PC-3 (cell line): ENCODE measurements at regions of chr7 and their contacts with region 1.

Region 1: GRCh38 chr7:46544374-46545008 is 623.4 kb upstream of the IGFBP3 start:
- DNase-seq: peak; percentile 76
- ATAC-seq: peak; percentile 62
- H3K4me3 ChIP-seq: no peak overlapping the region
- H3K27ac ChIP-seq: peak overlapping the region; percentile 85
- H3K4me1 ChIP-seq: peaks cover 32% of the 10 kb centered on the region
- H3K27me3 ChIP-seq: no peaks in the 10 kb centered on the region
- CTCF ChIP-seq: no peak

Region 2: DNA sequence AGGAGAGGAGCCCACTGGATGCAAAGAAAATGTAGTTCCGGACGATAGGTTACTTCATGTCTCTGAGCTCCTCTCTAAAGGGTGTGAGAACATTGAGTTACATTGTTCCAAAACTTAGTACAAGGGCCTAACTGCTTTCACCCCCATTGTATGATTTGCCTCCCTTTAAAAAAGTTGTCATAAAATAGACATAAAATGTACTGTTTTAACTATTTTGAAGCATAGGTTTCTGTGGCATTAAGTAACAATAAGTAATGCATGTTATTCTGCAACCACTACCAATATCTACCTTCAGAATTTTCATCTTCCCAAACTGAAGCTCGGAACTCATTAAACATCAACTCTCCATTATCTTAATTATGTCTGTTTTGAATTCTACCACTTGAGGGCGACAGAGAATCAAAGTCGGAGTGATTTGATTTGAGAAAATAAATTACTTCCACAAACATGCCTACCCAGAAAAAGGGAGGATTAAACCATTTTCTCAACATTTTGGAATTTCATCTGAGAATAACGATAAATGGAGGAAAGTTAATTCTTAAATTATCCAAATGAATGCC is 653.5 kb before region 1 on chr7:
- CTCF ChIA-PET with region 1: no interaction called
- POLR2A ChIA-PET with region 1: no interaction called
- intact Hi-C with region 1: loop called (anchors 10 kb)
- DNase-seq: peak; percentile 78
- ATAC-seq: no peak
- H3K4me3 ChIP-seq: no peak overlapping the region
- H3K27ac ChIP-seq: no peak overlapping the region
- H3K4me1 ChIP-seq: peaks cover 26% of the 10 kb centered on the region
- H3K27me3 ChIP-seq: no peaks in the 10 kb centered on the region
- CTCF ChIP-seq: peak; percentile 82

Region 3: GRCh38 chr7:46385662-46386309 is 158.7 kb before region 1 on chr7:
- CTCF ChIA-PET with region 1: no interaction called
- POLR2A ChIA-PET with region 1: no interaction called
- intact Hi-C with region 1: loop called (anchors 2 kb)
- DNase-seq: peak; percentile 94
- ATAC-seq: peak; percentile 98
- H3K4me3 ChIP-seq: no peak overlapping the region
- H3K27ac ChIP-seq: peak overlapping the region; percentile 95
- H3K4me1 ChIP-seq: peaks cover 27% of the 10 kb centered on the region
- H3K27me3 ChIP-seq: no peaks in the 10 kb centered on the region
- CTCF ChIP-seq: no peak

Region 4: DNA sequence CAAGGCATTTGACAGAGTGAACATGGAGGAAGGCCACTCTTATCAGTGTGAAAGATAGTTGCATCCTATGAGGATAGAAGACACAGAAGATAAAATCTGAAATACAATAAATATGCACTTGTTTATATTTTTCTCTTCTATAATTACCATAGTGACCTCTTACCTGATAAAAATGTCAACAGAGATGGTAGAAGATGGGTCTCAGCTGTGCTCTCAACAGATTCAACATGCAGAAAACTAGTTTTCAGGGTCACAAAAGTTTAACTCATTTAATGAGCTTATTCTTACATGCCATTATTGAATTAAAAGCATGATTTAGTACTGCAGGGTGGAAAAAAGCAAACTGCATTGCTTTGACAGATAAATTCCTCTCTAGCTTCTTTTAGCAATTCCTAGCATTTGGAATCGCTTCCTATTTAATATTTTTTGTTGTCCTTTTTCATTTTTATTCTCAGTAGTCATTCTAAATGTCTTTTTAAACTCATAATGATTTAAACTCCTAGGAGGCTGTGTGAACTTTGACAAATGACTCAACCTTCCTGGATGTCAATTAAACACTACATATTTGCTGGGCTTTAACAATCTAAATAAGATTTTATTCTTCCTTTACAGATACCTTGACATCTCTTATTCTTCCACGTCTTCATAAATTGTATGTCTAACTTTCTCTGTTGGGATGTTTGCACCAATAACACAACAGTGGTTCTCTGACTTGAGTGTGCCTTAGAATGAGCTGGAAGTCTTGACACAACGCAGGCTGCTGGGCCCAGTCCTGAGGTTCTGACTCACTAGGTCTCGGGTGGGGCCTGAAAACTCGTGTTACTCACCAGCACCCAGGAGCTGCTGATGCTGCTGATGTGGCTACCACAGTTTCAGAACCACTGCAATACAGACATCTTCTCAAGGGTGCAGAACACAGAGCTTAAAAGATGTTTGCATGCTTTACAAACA is 58.0 kb before region 1 on chr7:
- CTCF ChIA-PET with region 1: interaction called, 3 read pairs
- POLR2A ChIA-PET with region 1: interaction called, 3 read pairs
- intact Hi-C with region 1: loop called (anchors 2 kb)
- DNase-seq: peak; percentile 80
- ATAC-seq: peak; percentile 82
- H3K4me3 ChIP-seq: peak overlapping the region; percentile 7; the same call in 1 of the 2 replicates
- H3K27ac ChIP-seq: peak overlapping the region; percentile 88
- H3K4me1 ChIP-seq: peaks cover 39% of the 10 kb centered on the region
- H3K27me3 ChIP-seq: no peaks in the 10 kb centered on the region
- CTCF ChIP-seq: no peak

Region 5: DNA sequence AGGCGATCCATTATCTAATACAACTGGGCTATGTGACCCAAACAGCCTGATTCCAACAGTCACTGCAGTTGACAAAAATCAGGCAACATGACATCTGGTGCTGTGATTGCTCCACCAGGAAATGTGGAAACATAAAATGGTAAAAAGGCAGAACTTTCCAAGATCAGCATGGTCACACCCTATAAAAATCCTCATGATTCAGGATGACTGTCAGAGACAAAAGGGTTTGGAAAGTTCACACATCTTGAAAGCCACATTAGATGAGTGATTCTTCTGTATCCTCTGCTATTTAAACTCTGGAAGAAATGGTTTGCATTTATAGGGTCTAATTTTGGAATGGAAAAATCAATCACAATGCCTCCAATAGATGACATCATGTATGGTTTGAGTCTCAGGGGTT is 39.2 kb after region 1 on chr7:
- CTCF ChIA-PET with region 1: no interaction called
- POLR2A ChIA-PET with region 1: no interaction called
- intact Hi-C with region 1: loop called (anchors 5 kb)
- DNase-seq: peak; percentile 67
- ATAC-seq: peak; percentile 87
- H3K4me3 ChIP-seq: no peak overlapping the region
- H3K27ac ChIP-seq: peak overlapping the region; percentile 36
- H3K4me1 ChIP-seq: peaks cover 13% of the 10 kb centered on the region; the same call in 1 of the 2 replicates
- H3K27me3 ChIP-seq: no peaks in the 10 kb centered on the region
- CTCF ChIP-seq: no peak

Region 6: GRCh38 chr7:46630031-46630430 is 85.5 kb after region 1 on chr7:
- CTCF ChIA-PET with region 1: no interaction called
- POLR2A ChIA-PET with region 1: no interaction called
- intact Hi-C with region 1: no loop called
- DNase-seq: no peak
- ATAC-seq: no peak
- H3K4me3 ChIP-seq: no peak overlapping the region
- H3K27ac ChIP-seq: no peak overlapping the region
- H3K4me1 ChIP-seq: no peaks in the 10 kb centered on the region
- H3K27me3 ChIP-seq: no peaks in the 10 kb centered on the region
- CTCF ChIP-seq: no peak

Region 7: DNA sequence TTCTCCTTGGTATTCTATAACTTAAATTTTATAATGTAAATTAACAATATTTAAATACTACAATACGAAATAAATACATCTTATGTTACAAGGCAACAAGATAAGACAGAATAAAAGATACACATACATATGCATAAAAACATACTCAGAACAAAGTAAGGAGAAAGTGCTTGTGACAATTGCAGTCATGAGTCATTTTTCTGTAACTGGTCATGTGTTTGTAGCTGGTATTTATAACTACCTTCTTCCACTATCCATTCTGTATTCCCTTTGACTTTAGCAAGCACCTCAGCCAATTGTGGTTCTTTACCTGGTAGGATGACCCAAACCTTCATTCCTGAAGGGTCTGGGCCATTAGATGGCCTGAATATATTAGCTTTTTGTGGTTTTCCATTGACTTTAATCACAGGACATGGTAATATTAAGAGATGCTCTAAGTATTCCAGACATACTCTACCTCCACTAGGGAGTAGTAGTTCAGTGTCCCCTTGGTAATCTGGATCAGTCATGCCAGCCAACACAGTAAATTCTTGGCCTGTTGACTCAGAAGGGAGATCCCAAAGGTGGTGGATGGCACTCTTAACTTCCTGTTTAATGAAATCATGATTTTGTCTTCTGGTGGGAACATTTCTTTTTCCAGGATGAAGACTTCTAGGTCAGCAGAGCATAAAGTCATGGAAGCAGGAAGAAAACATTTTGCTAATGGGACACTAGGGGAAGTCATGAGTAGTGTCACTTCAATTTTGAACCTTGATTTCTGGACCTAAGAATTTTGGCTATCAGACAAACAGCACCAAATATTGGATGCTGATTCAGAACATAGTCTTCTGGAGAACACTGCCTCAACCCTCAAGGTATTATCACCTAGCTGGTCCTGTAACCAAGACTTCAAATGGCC is 110.3 kb after region 1 on chr7:
- CTCF ChIA-PET with region 1: no interaction called
- POLR2A ChIA-PET with region 1: no interaction called
- intact Hi-C with region 1: loop called (anchors 1 kb)
- DNase-seq: peak; percentile 41
- ATAC-seq: no peak
- H3K4me3 ChIP-seq: no peak overlapping the region
- H3K27ac ChIP-seq: peak overlapping the region; percentile 10; the same call in 1 of the 2 replicates
- H3K4me1 ChIP-seq: peaks cover 23% of the 10 kb centered on the region
- H3K27me3 ChIP-seq: no peaks in the 10 kb centered on the region
- CTCF ChIP-seq: 0 out of 2 replicates have a peak, but pooled peaks have one; percentile 9